CD4-positive, alpha-beta memory T cell (primary cell): ENCODE measurements at regions of chr4 and their contacts with region 1.

Region 1: GRCh38 chr4:80173401-80173800 is 23.9 kb upstream of the PRDM8 start:
- DNase-seq: peak; percentile 63 to 85 (median 72)
- H3K4me3 ChIP-seq: no peak overlapping the region
- H3K4me3 Mint-ChIP-seq: peak overlapping the region; percentile 43 to 82 (median 76)
- H3K27ac ChIP-seq: peak overlapping the region; percentile 71
- H3K27ac Mint-ChIP-seq: peak overlapping the region; percentile 93 to 96 (median 95)
- H3K4me1 ChIP-seq: peaks cover 67% of the 10 kb centered on the region
- H3K4me1 Mint-ChIP-seq: peaks cover 55 to 78% (median 67%) of the 10 kb centered on the region in 4 donors
- H3K27me3 ChIP-seq: no peaks in the 10 kb centered on the region
- H3K27me3 Mint-ChIP-seq: no peaks in the 10 kb centered on the region

Region 2: DNA sequence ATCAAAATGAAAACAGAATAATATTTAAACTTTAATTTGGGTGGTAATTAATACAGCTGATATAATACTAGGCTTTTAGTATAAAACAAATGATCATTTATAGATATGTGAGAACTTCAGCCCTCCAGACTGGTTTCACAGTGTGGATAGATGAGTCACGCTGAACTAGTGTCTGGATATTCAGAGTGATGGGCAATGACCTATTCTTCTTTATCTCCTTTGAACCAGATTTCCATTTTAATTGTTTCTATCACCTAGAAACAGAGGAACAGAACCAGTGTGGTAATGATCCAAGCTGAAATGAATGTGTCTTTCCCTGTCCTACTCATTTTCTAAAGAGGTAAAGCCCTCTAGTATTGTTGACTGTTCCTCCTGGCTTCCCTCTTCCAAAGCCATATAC is 610.2 kb before region 1 on chr4:
- CTCF ChIA-PET with region 1: no interaction called
- POLR2A ChIA-PET with region 1: no interaction called
- intact Hi-C with region 1: no loop called
- DNase-seq: no peak
- H3K4me3 ChIP-seq: no peak overlapping the region
- H3K4me3 Mint-ChIP-seq: no peak overlapping the region
- H3K27ac ChIP-seq: no peak overlapping the region
- H3K27ac Mint-ChIP-seq: no peak overlapping the region
- H3K4me1 ChIP-seq: no peaks in the 10 kb centered on the region
- H3K4me1 Mint-ChIP-seq: no peaks in the 10 kb centered on the region
- H3K27me3 ChIP-seq: no peaks in the 10 kb centered on the region
- H3K27me3 Mint-ChIP-seq: peaks cover 4 to 6% of the 10 kb centered on the region in 2 donors

Region 3: GRCh38 chr4:80138551-80139538 is 34.6 kb before region 1 on chr4:
- CTCF ChIA-PET with region 1: interaction called, 18 read pairs
- POLR2A ChIA-PET with region 1: interaction called, 66 read pairs
- intact Hi-C with region 1: loop called (anchors 1 kb)
- DNase-seq: peak; percentile 55 to 81 (median 66)
- H3K4me3 ChIP-seq: no peak overlapping the region
- H3K4me3 Mint-ChIP-seq: peak overlapping the region in 7 of 8 donors; percentile 9 to 68 (median 59)
- H3K27ac ChIP-seq: peak overlapping the region; percentile 45
- H3K27ac Mint-ChIP-seq: peak overlapping the region; percentile 84 to 94 (median 93)
- H3K4me1 ChIP-seq: peaks cover 58% of the 10 kb centered on the region
- H3K4me1 Mint-ChIP-seq: peaks cover 33 to 67% (median 43%) of the 10 kb centered on the region in 4 donors
- H3K27me3 ChIP-seq: no peaks in the 10 kb centered on the region
- H3K27me3 Mint-ChIP-seq: no peaks in the 10 kb centered on the region

Region 4: DNA sequence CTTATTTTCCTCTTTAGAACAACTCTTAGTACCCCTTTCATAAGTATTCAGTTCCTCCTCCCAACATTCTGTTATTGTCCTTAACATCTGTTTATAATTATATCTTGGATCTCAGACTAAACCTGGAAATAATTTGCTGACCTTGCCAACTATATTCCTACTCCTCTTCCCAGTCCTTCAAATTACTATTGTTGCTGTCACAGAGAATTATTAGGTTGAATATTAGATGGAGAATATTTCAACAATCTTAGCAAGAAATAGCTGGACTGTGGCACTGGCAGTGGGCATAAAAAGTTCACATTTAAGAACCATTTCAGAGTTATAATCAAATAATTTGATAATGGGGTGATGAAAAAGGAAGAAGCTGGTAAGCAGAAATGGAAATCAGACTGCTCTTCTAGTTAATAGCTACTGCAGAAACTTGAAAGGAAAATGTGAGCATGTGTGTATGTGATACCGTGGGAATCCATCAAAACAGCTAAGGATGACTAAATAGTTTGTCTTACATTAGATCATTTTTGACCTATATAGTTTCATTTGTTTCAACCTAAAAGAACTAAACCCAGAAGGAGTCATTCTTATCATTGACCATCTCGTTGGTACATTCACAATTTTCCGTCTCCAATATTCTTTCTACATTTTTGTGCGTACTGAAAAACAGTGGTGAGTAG is 19.4 kb before region 1 on chr4:
- CTCF ChIA-PET with region 1: interaction called, 12 read pairs
- POLR2A ChIA-PET with region 1: interaction called, 10 read pairs
- intact Hi-C with region 1: loop called (anchors 2 kb)
- DNase-seq: no peak
- H3K4me3 ChIP-seq: no peak overlapping the region
- H3K4me3 Mint-ChIP-seq: peak overlapping the region in 5 of 8 donors; percentile 5 to 51 (median 11)
- H3K27ac ChIP-seq: no peak overlapping the region
- H3K27ac Mint-ChIP-seq: peak overlapping the region in 4 of 7 donors; percentile 1 to 30 (median 13)
- H3K4me1 ChIP-seq: peaks cover 5% of the 10 kb centered on the region
- H3K4me1 Mint-ChIP-seq: peaks cover 0 to 15% (median 5%) of the 10 kb centered on the region in 4 donors
- H3K27me3 ChIP-seq: no peaks in the 10 kb centered on the region
- H3K27me3 Mint-ChIP-seq: peaks cover 0 to 1% of the 10 kb centered on the region in 2 donors

Region 5: GRCh38 chr4:80161413-80162058 is 11.9 kb before region 1 on chr4:
- CTCF ChIA-PET with region 1: interaction called, 12 read pairs
- POLR2A ChIA-PET with region 1: interaction called, 11 read pairs
- intact Hi-C with region 1: no loop called
- DNase-seq: no peak
- H3K4me3 ChIP-seq: no peak overlapping the region
- H3K4me3 Mint-ChIP-seq: no peak overlapping the region
- H3K27ac ChIP-seq: no peak overlapping the region
- H3K27ac Mint-ChIP-seq: no peak overlapping the region
- H3K4me1 ChIP-seq: no peaks in the 10 kb centered on the region
- H3K4me1 Mint-ChIP-seq: peaks cover 0 to 4% (median under 1%) of the 10 kb centered on the region in 4 donors
- H3K27me3 ChIP-seq: no peaks in the 10 kb centered on the region
- H3K27me3 Mint-ChIP-seq: peaks cover 0 to 1% of the 10 kb centered on the region in 2 donors

Region 6: GRCh38 chr4:80196922-80197573 is 23.6 kb after region 1 on chr4 and contains the start of gene PRDM8:
- CTCF ChIA-PET with region 1: interaction called, 221 read pairs
- POLR2A ChIA-PET with region 1: interaction called, 185 read pairs
- intact Hi-C with region 1: no loop called
- DNase-seq: peak in 3 of 5 donors; percentile 40 to 61 (median 43)
- H3K4me3 ChIP-seq: peak within 1 kb of the TSS; percentile 7 to 25
- H3K4me3 Mint-ChIP-seq: peak within 1 kb of the TSS; percentile 63 to 86 (median 80)
- H3K27ac ChIP-seq: no peak within 1 kb of the TSS
- H3K27ac Mint-ChIP-seq: peak within 1 kb of the TSS; percentile 2 to 88 (median 68)
- H3K4me1 ChIP-seq: peaks cover 28% of the 10 kb centered on the region
- H3K4me1 Mint-ChIP-seq: peaks cover 23 to 53% (median 38%) of the 10 kb centered on the region in 4 donors
- H3K27me3 ChIP-seq: no peaks in the 10 kb centered on the region
- H3K27me3 Mint-ChIP-seq: no peaks in the 10 kb centered on the region
- total RNA-seq, gene PRDM8: 19.8 to 23.0 TPM

Region 7: DNA sequence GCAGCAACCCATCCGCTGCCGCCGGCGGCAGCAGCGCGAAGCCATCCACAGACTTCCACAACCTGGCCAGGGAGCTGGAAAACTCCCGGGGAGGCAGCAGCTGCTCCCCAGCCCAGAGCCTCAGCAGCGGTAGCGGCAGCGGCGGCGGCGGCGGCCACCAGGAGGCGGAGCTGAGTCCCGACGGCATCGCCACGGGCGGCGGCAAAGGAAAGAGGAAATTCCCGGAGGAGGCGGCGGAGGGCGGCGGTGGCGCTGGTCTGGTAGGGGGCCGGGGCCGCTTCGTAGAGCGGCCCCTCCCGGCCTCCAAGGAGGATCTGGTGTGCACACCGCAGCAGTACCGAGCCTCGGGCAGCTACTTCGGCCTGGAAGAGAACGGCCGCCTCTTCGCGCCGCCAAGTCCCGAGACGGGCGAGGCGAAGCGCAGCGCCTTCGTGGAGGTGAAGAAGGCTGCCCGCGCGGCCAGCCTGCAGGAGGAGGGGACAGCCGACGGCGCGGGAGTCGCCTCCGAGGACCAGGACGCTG is 28.9 kb after region 1 on chr4:
- CTCF ChIA-PET with region 1: interaction called, 221 read pairs
- POLR2A ChIA-PET with region 1: interaction called, 185 read pairs
- intact Hi-C with region 1: no loop called
- DNase-seq: peak; percentile 72 to 81 (median 77)
- H3K4me3 ChIP-seq: peak overlapping the region; percentile 23 to 77
- H3K4me3 Mint-ChIP-seq: peak overlapping the region; percentile 82 to 94 (median 88)
- H3K27ac ChIP-seq: peak overlapping the region; percentile 82
- H3K27ac Mint-ChIP-seq: peak overlapping the region; percentile 89 to 93 (median 91)
- H3K4me1 ChIP-seq: peaks cover 17% of the 10 kb centered on the region
- H3K4me1 Mint-ChIP-seq: peaks cover 23 to 34% (median 27%) of the 10 kb centered on the region in 4 donors
- H3K27me3 ChIP-seq: no peaks in the 10 kb centered on the region
- H3K27me3 Mint-ChIP-seq: no peaks in the 10 kb centered on the region